ENCODE measurements at regions of chr9 and their contacts with region 1.

Region 1: DNA sequence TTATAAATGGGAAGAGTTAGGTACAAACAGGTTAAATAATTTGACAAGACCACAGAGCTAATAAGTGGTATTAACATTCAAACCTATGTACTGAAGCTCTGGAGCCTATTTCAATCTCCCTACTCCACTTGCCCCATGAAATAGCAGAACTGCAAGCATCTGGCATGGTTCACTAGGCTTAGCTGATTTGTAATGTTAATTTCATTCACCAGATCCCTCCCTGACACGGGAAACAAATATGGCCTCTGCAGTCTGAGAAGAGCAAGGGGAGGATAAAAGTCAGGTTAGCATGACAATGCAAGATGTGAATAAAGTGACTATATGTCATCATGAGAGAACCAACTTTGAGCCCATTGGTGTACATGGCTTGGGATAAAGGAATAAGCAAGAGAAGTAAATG is 428.8 kb downstream of the BRINP1 start:
- DNase-seq: no peak
- H3K4me3 ChIP-seq: no peak overlapping the region
- H3K27ac ChIP-seq: no peak overlapping the region
- H3K4me1 ChIP-seq: no peaks in the 10 kb centered on the region
- H3K27me3 ChIP-seq: no peaks in the 10 kb centered on the region
- CTCF ChIP-seq: no peak
- POLR2A ChIP-seq: no peak

Region 2: DNA sequence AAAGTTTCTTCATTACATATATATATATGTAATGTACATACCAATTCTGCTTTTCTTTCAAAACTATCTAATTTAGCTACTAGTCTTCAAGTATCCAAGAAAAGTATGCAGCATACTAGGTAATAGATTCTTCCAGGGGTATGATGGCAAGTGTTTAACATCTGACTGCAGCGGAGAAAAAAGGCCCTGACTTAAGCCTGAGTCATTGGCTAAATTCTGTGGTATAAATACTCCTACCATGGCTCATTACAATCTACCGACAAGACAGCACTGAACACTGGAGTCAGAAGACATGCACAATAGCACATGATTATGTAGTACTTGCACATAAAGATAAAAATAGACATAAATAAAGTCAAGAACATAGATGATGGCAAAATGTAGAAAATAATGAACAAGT is 11.2 kb before region 1 on chr9:
- intact Hi-C with region 1: loop called (anchors 1 kb)
- DNase-seq: no peak
- H3K4me3 ChIP-seq: no peak overlapping the region
- H3K27ac ChIP-seq: no peak overlapping the region
- H3K4me1 ChIP-seq: no peaks in the 10 kb centered on the region
- H3K27me3 ChIP-seq: no peaks in the 10 kb centered on the region
- CTCF ChIP-seq: no peak
- POLR2A ChIP-seq: no peak

Measured in breast epithelium (tissue), 4 donors.